Activated T-helper 2 cell treated with anti-CD3 and anti-CD28 coated beads, Interferon-gamma antibody, Interleukin-2, Interleukin-4, amounts not matched to agents 10 μg/mL and 5 μg/mL and 100 μg/mL, durations not matched to agents 14 hours and 24 hours and 36 hours (primary cell): ENCODE measurements at regions of chr19 and their contacts with region 1.

Region 1: GRCh38 chr19:771332-771785 is 20.4 kb downstream of the MISP start:
- DNase-seq: no peak
- H3K4me3 Mint-ChIP-seq: no peak overlapping the region
- H3K27ac Mint-ChIP-seq: no peak overlapping the region
- H3K4me1 Mint-ChIP-seq: peaks cover 2% of the 10 kb centered on the region
- H3K27me3 Mint-ChIP-seq: peaks cover 2% of the 10 kb centered on the region

Region 2: DNA sequence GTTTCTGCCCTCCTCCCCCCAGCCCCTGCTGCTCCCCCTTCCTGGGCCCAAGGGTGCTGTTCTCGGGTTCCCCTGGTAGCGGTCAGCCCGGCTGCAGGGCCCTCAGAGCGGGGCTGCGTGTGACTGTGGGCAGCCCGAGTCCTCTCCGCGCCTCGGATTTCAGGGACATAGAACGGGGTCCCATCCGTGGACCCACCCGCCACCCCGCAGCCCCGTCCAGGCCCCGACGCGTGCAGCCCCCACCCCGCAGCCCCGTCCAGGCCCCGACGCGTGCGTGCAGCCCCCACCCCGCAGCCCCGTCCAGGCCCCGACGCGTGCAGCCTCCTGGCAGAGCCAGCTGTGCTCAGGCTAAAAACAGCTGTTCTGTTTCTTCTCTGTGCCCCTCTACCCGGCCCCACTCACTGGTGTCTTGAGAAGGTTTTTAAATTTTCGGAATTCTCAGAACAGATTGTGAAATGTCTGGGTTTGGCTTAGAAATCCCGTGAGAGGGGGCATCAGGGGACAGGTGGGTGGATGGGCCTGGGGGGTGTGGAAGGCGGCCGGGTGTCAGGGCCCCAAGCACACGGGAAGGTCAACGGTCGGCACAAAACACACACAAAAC is 64.0 kb after region 1 on chr19:
- intact Hi-C with region 1: loop called (anchors 10 kb)
- DNase-seq: no peak
- H3K4me3 Mint-ChIP-seq: no peak overlapping the region
- H3K27ac Mint-ChIP-seq: no peak overlapping the region
- H3K4me1 Mint-ChIP-seq: peaks cover 3% of the 10 kb centered on the region
- H3K27me3 Mint-ChIP-seq: peaks cover 8% of the 10 kb centered on the region

Region 3: GRCh38 chr19:920051-920864 is 148.9 kb after region 1 on chr19:
- intact Hi-C with region 1: loop called (anchors 2 kb)
- DNase-seq: peak; percentile 60
- H3K4me3 Mint-ChIP-seq: peak overlapping the region; percentile 78
- H3K27ac Mint-ChIP-seq: peak overlapping the region; percentile 87
- H3K4me1 Mint-ChIP-seq: peaks cover 14% of the 10 kb centered on the region
- H3K27me3 Mint-ChIP-seq: peaks cover 4% of the 10 kb centered on the region

Region 4: GRCh38 chr19:1001538-1002166 is 230.3 kb after region 1 on chr19:
- intact Hi-C with region 1: loop called (anchors 2 kb)
- DNase-seq: peak; percentile 49
- H3K4me3 Mint-ChIP-seq: no peak overlapping the region
- H3K27ac Mint-ChIP-seq: no peak overlapping the region
- H3K4me1 Mint-ChIP-seq: peaks cover 1% of the 10 kb centered on the region
- H3K27me3 Mint-ChIP-seq: peaks cover 23% of the 10 kb centered on the region